ENCODE measurements at regions of chr18 and their contacts with region 1.

Region 1: DNA sequence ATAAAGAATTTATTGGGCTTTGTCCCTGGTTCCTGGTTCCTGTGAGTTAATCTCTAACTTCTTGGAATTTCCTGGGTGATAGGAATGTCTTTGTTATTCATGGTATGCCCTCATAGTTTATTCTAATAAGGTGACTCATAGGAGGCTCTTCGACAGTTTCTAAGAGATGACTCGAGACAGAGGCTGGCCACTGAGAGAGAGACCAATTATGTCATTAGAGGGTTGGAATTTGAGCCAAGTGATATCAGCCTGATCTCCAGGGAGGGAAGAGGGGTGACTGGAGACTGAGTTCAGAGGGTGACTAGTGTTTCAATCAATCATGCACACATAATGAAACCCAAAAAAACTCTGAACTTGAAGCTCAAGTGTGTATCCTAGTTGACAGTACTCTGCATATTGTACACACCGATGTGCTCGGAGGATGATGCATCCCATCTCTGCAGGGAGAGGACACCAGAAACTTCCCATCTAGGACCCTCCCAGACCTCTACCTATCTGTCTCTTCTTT is 185.7 kb downstream of the MTCL1 start:
- DNase-seq: peak; percentile 75 to 83
- H3K4me3 ChIP-seq: no peak overlapping the region
- H3K4me3 Mint-ChIP-seq: peak overlapping the region; percentile 64
- H3K27ac Mint-ChIP-seq: peak overlapping the region; percentile 93
- H3K4me1 ChIP-seq: peaks cover 21% of the 10 kb centered on the region
- H3K4me1 Mint-ChIP-seq: peaks cover 10% of the 10 kb centered on the region
- H3K27me3 ChIP-seq: no peaks in the 10 kb centered on the region
- H3K27me3 Mint-ChIP-seq: no peaks in the 10 kb centered on the region
- CTCF ChIP-seq: no peak

Region 2: GRCh38 chr18:8908792-8909510 is 17.9 kb after region 1 on chr18:
- CTCF ChIA-PET with region 1: no interaction called
- POLR2A ChIA-PET with region 1: no interaction called
- intact Hi-C with region 1: loop called (anchors 2 kb)
- DNase-seq: peak; percentile 52 to 67
- H3K4me3 ChIP-seq: no peak overlapping the region
- H3K4me3 Mint-ChIP-seq: no peak overlapping the region
- H3K27ac Mint-ChIP-seq: peak overlapping the region; percentile 42
- H3K4me1 ChIP-seq: peaks cover 34% of the 10 kb centered on the region
- H3K4me1 Mint-ChIP-seq: peaks cover 11% of the 10 kb centered on the region
- H3K27me3 ChIP-seq: no peaks in the 10 kb centered on the region
- H3K27me3 Mint-ChIP-seq: no peaks in the 10 kb centered on the region
- CTCF ChIP-seq: no peak

Region 3: GRCh38 chr18:8937160-8938094 is 46.4 kb after region 1 on chr18:
- CTCF ChIA-PET with region 1: no interaction called
- POLR2A ChIA-PET with region 1: no interaction called
- intact Hi-C with region 1: loop called (anchors 2 kb)
- DNase-seq: peak in 1 of 2 experiments; percentile 57
- H3K4me3 ChIP-seq: no peak overlapping the region
- H3K4me3 Mint-ChIP-seq: peak overlapping the region; percentile 37
- H3K27ac Mint-ChIP-seq: peak overlapping the region; percentile 74
- H3K4me1 ChIP-seq: peaks cover 43% of the 10 kb centered on the region
- H3K4me1 Mint-ChIP-seq: peaks cover 20% of the 10 kb centered on the region
- H3K27me3 ChIP-seq: no peaks in the 10 kb centered on the region
- H3K27me3 Mint-ChIP-seq: no peaks in the 10 kb centered on the region
- CTCF ChIP-seq: no peak

Region 4: DNA sequence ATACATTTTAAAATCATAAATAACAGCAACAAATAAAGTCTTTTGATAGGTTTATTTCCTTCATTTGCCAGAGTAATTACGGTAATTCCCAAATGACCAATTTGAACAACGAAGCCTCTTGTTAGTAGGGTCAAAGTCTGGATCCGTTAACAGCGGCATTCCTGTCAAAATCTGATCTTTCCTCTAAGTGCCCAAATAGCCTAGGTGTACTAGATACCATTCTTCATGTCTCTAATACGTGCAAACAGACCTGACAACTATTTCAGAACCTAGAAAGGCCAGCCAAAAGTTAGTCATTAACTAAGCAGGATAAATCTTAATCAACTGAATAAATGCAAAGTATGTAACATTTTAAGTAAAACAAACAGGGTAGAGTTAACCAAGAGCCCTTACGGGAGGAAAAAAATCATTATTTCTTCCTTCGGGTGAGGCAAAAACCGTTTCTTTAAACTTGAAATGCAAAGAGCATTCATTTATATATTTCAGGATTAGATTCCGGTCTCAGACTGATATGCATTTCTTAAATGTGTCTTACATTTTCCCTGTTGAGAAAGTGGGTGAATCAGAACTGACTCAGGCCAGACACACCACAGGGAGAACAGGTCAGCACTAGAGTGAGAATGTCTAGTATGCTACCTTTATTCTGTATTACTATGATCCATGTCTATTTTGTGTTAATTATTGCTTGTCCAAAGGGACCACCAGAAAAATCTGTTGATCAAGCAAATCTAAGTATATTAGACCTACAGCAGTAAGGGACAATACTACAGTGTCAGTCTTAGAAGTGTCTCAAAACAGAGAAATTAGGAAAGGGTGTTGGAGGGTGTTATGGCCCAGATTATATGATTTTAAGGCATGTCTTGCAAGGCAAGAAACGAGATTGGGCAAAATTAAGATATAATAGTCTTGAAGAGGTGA is 70.0 kb after region 1 on chr18:
- CTCF ChIA-PET with region 1: no interaction called
- POLR2A ChIA-PET with region 1: no interaction called
- intact Hi-C with region 1: loop called (anchors 2 kb)
- DNase-seq: peak in 1 of 2 experiments; percentile 52
- H3K4me3 ChIP-seq: no peak overlapping the region
- H3K4me3 Mint-ChIP-seq: peak overlapping the region; percentile 62
- H3K27ac Mint-ChIP-seq: peak overlapping the region; percentile 74
- H3K4me1 ChIP-seq: peaks cover 73% of the 10 kb centered on the region
- H3K4me1 Mint-ChIP-seq: peaks cover 42% of the 10 kb centered on the region
- H3K27me3 ChIP-seq: no peaks in the 10 kb centered on the region
- H3K27me3 Mint-ChIP-seq: no peaks in the 10 kb centered on the region
- CTCF ChIP-seq: no peak

Measured in Caco-2 (cell line).